Cardiac septum (tissue), 1 donor: ENCODE measurements at regions of chr14 and their contacts with region 1.

Region 1: DNA sequence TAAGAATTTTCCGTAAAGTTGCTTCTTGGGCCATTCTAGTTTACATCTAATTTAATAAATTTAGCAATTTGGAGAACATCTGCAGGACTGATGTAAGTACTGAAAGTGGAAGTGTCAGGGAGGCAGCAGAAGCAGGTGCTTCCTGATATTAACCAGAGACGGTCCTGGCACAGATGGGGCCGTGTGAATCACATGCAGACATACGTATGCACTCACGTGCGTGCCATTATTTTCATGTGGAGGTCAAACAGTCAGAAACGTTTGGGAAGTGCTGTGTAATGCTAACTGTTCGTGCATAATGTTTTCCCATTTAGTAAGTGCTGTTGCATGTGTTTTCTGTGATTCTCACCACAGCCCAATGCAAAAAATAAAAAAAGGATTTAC is 87.8 kb upstream of the DYNC1H1 start:
- DNase-seq: no peak

Region 2: GRCh38 chr14:101809671-101810514 is 66.7 kb before region 1 on chr14:
- intact Hi-C with region 1: loop called (anchors 5 kb)
- DNase-seq: peak; percentile 92